Ovary (tissue), 10 donors: ENCODE measurements at regions of chr15 and their contacts with region 1.

Region 1: DNA sequence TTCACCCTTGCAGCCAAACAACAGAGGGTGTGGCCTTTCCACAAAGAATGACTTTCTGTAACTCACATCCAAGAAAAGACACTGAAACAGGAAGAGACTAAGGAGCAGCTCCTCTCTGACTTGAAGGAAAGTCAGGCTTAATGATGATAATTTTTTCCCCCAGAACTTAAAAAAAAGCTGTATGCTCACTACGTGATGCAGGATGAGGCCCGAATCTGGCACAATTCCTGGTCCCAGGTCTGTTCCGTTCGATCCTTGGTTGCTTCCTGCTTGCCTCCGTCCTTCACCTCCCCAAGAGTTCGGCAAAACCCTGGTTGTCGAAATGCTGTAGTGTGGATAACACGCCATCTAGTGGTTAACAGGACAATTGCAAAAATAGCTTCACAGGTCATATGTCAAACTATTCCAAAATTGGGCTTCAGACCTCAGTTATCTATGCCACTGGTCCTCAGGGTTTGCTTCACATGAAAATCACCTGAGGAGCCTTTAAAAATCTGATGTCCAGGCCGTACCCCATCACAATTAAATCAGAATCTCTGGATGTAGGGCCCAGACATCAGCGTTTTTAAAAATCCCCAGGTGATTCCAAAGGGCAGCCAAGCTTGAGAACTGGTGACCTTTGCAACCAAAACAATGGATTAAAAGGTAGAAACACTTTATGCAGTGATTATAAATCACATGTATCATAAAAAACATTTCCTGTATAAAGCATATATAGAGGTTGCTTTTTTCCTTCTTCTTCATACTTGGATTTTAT is 28.1 kb upstream of the SYNM start:
- DNase-seq: peak; percentile 74 to 83 (median 76)
- H3K4me3 ChIP-seq: peak overlapping the region; percentile 8
- H3K27ac ChIP-seq: peak overlapping the region in 1 of 2 donors; percentile 31
- H3K4me1 ChIP-seq: no peaks in the 10 kb centered on the region
- H3K27me3 ChIP-seq: no peaks in the 10 kb centered on the region
- CTCF ChIP-seq: peak; percentile 72 to 89 (median 87)
- EP300 ChIP-seq: no peak
- POLR2A ChIP-seq: no peak

Region 2: DNA sequence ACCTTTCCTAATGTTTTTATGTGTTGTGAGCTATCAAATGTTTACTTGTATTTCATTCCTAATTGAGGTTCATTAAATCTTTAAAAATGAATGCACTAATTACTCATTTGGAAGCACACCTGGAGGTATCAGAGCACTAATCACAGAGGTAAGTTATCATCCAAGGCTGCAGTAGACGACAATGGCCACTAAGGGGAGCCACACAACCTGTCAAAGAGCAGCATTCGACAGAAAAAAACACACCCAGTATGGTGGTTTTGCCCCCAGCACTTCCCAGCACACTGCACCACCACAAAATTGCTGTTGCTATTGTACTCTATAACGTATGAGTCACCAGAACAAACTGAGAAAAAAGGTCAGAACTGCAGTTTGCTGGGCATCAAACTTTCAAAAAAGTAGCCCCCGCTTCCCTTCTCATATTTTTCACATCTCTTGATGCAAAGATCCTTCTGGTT is 634.3 kb before region 1 on chr15:
- intact Hi-C with region 1: loop called in 3 of 4 experiments (anchors 5 to 10 kb)
- DNase-seq: peak; percentile 30 to 71 (median 47)
- H3K4me3 ChIP-seq: no peak overlapping the region
- H3K27ac ChIP-seq: no peak overlapping the region
- H3K4me1 ChIP-seq: no peaks in the 10 kb centered on the region
- H3K27me3 ChIP-seq: no peaks in the 10 kb centered on the region
- CTCF ChIP-seq: peak; percentile 47 to 66 (median 48)
- EP300 ChIP-seq: no peak
- POLR2A ChIP-seq: no peak

Region 3: DNA sequence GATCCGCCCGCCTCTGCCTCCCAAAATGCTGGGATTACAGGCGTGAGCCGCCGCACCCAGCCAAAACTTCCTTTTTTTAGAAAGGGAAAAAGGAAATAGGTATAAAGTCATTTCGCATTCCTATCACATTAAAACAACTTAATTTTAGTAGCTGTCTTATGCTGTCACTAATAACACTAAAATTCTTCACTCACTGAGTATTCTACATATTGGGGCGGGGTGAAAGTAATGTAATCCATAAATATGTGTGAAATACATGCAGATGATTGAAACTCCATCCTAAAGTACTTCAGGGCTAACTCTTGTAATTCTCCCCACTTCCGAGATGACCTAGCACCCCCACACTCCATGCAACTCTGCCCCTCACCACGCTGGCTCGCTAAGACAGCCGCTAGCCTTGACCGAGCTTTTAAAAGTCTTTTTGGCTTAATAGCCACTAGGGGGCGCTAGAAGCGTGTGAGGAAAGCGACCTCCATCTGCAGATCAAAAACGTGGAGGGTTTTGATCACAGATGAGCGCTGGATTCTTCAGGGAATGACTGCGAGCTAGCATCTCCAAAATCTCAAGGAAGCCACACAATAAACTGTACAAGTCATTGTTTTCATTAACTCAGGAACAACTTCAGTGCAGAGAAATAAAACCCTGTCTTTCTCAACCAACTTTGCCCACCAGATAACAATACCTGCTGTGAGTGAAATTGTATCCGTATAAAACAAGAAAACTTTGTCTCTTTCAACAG is 557.7 kb before region 1 on chr15:
- intact Hi-C with region 1: loop called in 3 of 4 experiments (anchors 5 kb)
- DNase-seq: peak in 4 of 5 donors; percentile 47 to 68 (median 56)
- H3K4me3 ChIP-seq: no peak overlapping the region
- H3K27ac ChIP-seq: no peak overlapping the region
- H3K4me1 ChIP-seq: peaks cover 1% of the 10 kb centered on the region
- H3K27me3 ChIP-seq: no peaks in the 10 kb centered on the region
- CTCF ChIP-seq: peak; percentile 77 to 83 (median 77)
- EP300 ChIP-seq: no peak
- POLR2A ChIP-seq: no peak

Region 4: GRCh38 chr15:98525661-98526001 is 551.1 kb before region 1 on chr15:
- intact Hi-C with region 1: loop called in 2 of 4 experiments (anchors 5 kb)
- DNase-seq: peak; percentile 57 to 81 (median 67)
- H3K4me3 ChIP-seq: no peak overlapping the region
- H3K27ac ChIP-seq: peak overlapping the region; percentile 49 to 75
- H3K4me1 ChIP-seq: peaks cover 4% of the 10 kb centered on the region
- H3K27me3 ChIP-seq: no peaks in the 10 kb centered on the region
- CTCF ChIP-seq: no peak
- EP300 ChIP-seq: no peak
- POLR2A ChIP-seq: no peak

Region 5: GRCh38 chr15:98865397-98866339 is 211.1 kb before region 1 on chr15:
- intact Hi-C with region 1: loop called in 1 of 4 experiments (anchors 10 kb)
- DNase-seq: peak; percentile 68 to 89 (median 82)
- H3K4me3 ChIP-seq: peak overlapping the region; percentile 31
- H3K27ac ChIP-seq: peak overlapping the region in 1 of 2 donors; percentile 69
- H3K4me1 ChIP-seq: peaks cover 22% of the 10 kb centered on the region
- H3K27me3 ChIP-seq: no peaks in the 10 kb centered on the region
- CTCF ChIP-seq: no peak
- EP300 ChIP-seq: no peak
- POLR2A ChIP-seq: no peak

Region 6: GRCh38 chr15:99029341-99030144 is 47.2 kb before region 1 on chr15:
- intact Hi-C with region 1: no loop called
- DNase-seq: no peak
- H3K4me3 ChIP-seq: no peak overlapping the region
- H3K27ac ChIP-seq: no peak overlapping the region
- H3K4me1 ChIP-seq: no peaks in the 10 kb centered on the region
- H3K27me3 ChIP-seq: no peaks in the 10 kb centered on the region
- CTCF ChIP-seq: no peak
- EP300 ChIP-seq: no peak
- POLR2A ChIP-seq: no peak